ENCODE measurements at regions of chr4 and their contacts with region 1.

Region 1: GRCh38 chr4:1346781-1347409 is at the start of gene UVSSA:
- DNase-seq: peak; percentile 100
- ATAC-seq: peak; percentile 90
- H3K4me3 ChIP-seq: peak within 1 kb of the TSS; percentile 72 to 96
- H3K4me3 Mint-ChIP-seq: peak within 1 kb of the TSS; percentile 89
- H3K27ac ChIP-seq: peak within 1 kb of the TSS; percentile 89 to 92
- H3K27ac Mint-ChIP-seq: peak within 1 kb of the TSS; percentile 95
- H3K4me1 ChIP-seq: peaks cover 23% of the 10 kb centered on the region
- H3K4me1 Mint-ChIP-seq: peaks cover 42% of the 10 kb centered on the region
- H3K27me3 ChIP-seq: no peaks in the 10 kb centered on the region
- H3K27me3 Mint-ChIP-seq: no peaks in the 10 kb centered on the region
- CTCF ChIP-seq: no peak
- total RNA-seq, gene UVSSA: 27.3 to 27.5 TPM

Region 2: DNA sequence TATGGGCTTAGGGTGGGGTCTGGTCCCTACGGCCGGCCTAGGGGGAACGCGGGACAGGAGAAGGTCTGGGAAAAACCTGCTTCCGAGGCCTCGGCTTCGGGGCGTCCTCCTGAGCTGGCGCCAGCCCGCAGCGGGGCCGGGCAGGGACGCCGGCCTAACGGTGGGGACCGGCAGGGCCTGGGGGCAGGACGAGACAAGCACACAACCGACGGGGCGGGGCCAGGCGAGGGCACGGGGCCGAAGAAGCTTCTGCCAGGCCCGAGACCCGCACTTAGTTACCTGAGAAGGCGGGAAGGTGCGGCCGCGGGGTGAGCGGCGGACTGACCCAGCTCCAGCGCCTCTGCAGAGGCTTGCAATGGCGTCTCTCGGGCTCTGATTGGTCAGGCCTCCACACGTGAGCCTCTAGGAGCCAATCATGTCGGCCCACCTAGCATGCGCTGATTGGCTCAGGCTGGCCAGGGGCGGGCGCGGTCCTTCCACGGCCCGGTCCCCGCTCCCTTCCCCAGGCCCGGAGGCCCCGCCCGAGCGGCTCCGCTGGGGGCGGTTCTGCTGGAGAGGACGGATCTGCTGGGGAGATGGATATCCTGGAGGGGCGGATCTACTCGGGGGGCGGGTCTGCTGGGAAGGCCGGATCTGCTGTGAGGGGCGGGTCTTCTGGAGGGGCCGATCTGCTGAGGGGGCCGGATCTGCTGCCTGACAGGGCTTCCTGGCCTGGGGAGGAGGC is 565.2 kb before region 1 on chr4:
- CTCF ChIA-PET with region 1: no interaction called
- POLR2A ChIA-PET with region 1: no interaction called
- intact Hi-C with region 1: loop called in 1 of 2 experiments (anchors 2 kb)
- DNase-seq: peak; percentile 97 to 99 (median 98)
- ATAC-seq: peak; percentile 92
- H3K4me3 ChIP-seq: peak overlapping the region; percentile 76 to 97
- H3K4me3 Mint-ChIP-seq: peak overlapping the region; percentile 92
- H3K27ac ChIP-seq: peak overlapping the region; percentile 94 to 95
- H3K27ac Mint-ChIP-seq: peak overlapping the region; percentile 95
- H3K4me1 ChIP-seq: peaks cover 46% of the 10 kb centered on the region
- H3K4me1 Mint-ChIP-seq: peaks cover 52% of the 10 kb centered on the region
- H3K27me3 ChIP-seq: peaks cover 0 to 17% of the 10 kb centered on the region in 2 experiments
- H3K27me3 Mint-ChIP-seq: peaks cover 21% of the 10 kb centered on the region
- CTCF ChIP-seq: no peak

Region 3: GRCh38 chr4:1082215-1083182 is 264.4 kb before region 1 on chr4:
- CTCF ChIA-PET with region 1: no interaction called
- POLR2A ChIA-PET with region 1: no interaction called
- intact Hi-C with region 1: no loop called
- DNase-seq: peak in 1 of 9 experiments; percentile 25
- ATAC-seq: no peak
- H3K4me3 ChIP-seq: no peak overlapping the region
- H3K4me3 Mint-ChIP-seq: no peak overlapping the region
- H3K27ac ChIP-seq: no peak overlapping the region
- H3K27ac Mint-ChIP-seq: no peak overlapping the region
- H3K4me1 ChIP-seq: no peaks in the 10 kb centered on the region
- H3K4me1 Mint-ChIP-seq: no peaks in the 10 kb centered on the region
- H3K27me3 ChIP-seq: no peaks in the 10 kb centered on the region
- H3K27me3 Mint-ChIP-seq: peaks cover 32% of the 10 kb centered on the region
- CTCF ChIP-seq: no peak

Region 4: GRCh38 chr4:1130316-1131186 is 216.3 kb before region 1 on chr4:
- CTCF ChIA-PET with region 1: interaction called, 52 read pairs
- POLR2A ChIA-PET with region 1: no interaction called
- intact Hi-C with region 1: loop called (anchors 1 kb)
- DNase-seq: peak; percentile 60 to 88 (median 74)
- ATAC-seq: peak; percentile 100
- H3K4me3 ChIP-seq: no peak overlapping the region
- H3K4me3 Mint-ChIP-seq: no peak overlapping the region
- H3K27ac ChIP-seq: no peak overlapping the region
- H3K27ac Mint-ChIP-seq: no peak overlapping the region
- H3K4me1 ChIP-seq: no peaks in the 10 kb centered on the region
- H3K4me1 Mint-ChIP-seq: peaks cover 4% of the 10 kb centered on the region
- H3K27me3 ChIP-seq: no peaks in the 10 kb centered on the region
- H3K27me3 Mint-ChIP-seq: peaks cover 2% of the 10 kb centered on the region
- CTCF ChIP-seq: peak; percentile 99

Region 5: GRCh38 chr4:1266881-1267763 is 79.8 kb before region 1 on chr4:
- CTCF ChIA-PET with region 1: interaction called, 12 read pairs
- POLR2A ChIA-PET with region 1: no interaction called
- intact Hi-C with region 1: loop called (anchors 5 kb)
- DNase-seq: peak in 2 of 9 experiments; percentile 23 to 64
- ATAC-seq: peak; percentile 78
- H3K4me3 ChIP-seq: peak overlapping the region in 1 of 2 experiments; percentile 46
- H3K4me3 Mint-ChIP-seq: peak overlapping the region; percentile 76
- H3K27ac ChIP-seq: peak overlapping the region; percentile 57 to 73
- H3K27ac Mint-ChIP-seq: peak overlapping the region; percentile 93
- H3K4me1 ChIP-seq: peaks cover 12% of the 10 kb centered on the region
- H3K4me1 Mint-ChIP-seq: peaks cover 20% of the 10 kb centered on the region
- H3K27me3 ChIP-seq: no peaks in the 10 kb centered on the region
- H3K27me3 Mint-ChIP-seq: no peaks in the 10 kb centered on the region
- CTCF ChIP-seq: no peak

Region 6: GRCh38 chr4:1329408-1330371 is 17.2 kb before region 1 on chr4:
- CTCF ChIA-PET with region 1: interaction called, 8 read pairs
- POLR2A ChIA-PET with region 1: interaction called, 8 read pairs
- intact Hi-C with region 1: loop called (anchors 1 kb)
- DNase-seq: peak in 6 of 9 experiments; percentile 27 to 74 (median 68)
- ATAC-seq: peak; percentile 49
- H3K4me3 ChIP-seq: no peak overlapping the region
- H3K4me3 Mint-ChIP-seq: peak overlapping the region; percentile 50
- H3K27ac ChIP-seq: peak overlapping the region in 1 of 2 experiments; percentile 78
- H3K27ac Mint-ChIP-seq: peak overlapping the region; percentile 93
- H3K4me1 ChIP-seq: peaks cover 40% of the 10 kb centered on the region
- H3K4me1 Mint-ChIP-seq: peaks cover 24% of the 10 kb centered on the region
- H3K27me3 ChIP-seq: no peaks in the 10 kb centered on the region
- H3K27me3 Mint-ChIP-seq: no peaks in the 10 kb centered on the region
- CTCF ChIP-seq: no peak

Region 7: DNA sequence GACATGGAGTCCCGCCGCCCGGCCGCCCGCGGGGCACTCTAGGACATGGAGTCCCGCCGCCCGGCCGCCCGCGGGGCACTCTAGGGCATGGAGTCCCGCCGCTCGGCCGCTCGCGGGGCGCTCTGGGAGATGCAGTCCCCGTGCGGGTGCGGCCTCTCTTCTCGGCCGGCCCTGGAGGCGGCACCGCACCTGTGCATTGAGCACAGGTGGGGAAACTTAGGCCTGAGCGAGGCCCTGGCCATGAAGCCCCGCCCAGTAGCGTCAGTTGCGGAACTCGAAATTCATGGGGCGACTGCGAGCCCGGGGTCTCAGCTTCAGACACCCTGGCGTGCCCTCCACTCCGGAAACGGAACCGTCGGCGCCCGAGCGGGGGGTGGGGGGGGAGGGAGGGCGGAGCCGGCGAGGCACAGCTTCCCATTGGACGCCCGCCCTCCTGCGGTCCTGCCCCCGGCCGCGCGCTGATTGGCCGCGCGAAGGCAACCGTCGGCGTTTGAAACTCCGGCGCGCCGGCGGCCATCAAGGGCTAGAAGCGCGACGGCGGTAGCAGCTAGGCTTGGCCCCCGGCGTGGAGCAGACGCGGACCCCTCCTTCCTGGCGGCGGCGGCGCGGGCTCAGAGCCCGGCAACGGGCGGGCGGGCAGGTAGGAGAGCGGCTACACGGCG is 374.2 kb after region 1 on chr4 and contains the starts of genes TACC3 and TMEM129:
- CTCF ChIA-PET with region 1: no interaction called
- POLR2A ChIA-PET with region 1: no interaction called
- intact Hi-C with region 1: loop called in 1 of 2 experiments (anchors 2 kb)
- DNase-seq: peak; percentile 89 to 98 (median 94)
- ATAC-seq: peak; percentile 82
- H3K4me3 ChIP-seq: peak within 1 kb of the TSS; percentile 54 to 74
- H3K4me3 Mint-ChIP-seq: peak within 1 kb of the TSS; percentile 86
- H3K27ac ChIP-seq: peak within 1 kb of the TSS; percentile 85 to 86
- H3K27ac Mint-ChIP-seq: peak within 1 kb of the TSS; percentile 100
- H3K4me1 ChIP-seq: peaks cover 56% of the 10 kb centered on the region
- H3K4me1 Mint-ChIP-seq: peaks cover 49% of the 10 kb centered on the region
- H3K27me3 ChIP-seq: no peaks in the 10 kb centered on the region
- H3K27me3 Mint-ChIP-seq: no peaks in the 10 kb centered on the region
- CTCF ChIP-seq: no peak
- total RNA-seq, gene TACC3: 131 to 137 TPM
- total RNA-seq, gene TMEM129: 14.5 to 14.8 TPM

Measured in CD8-positive, alpha-beta T cell (primary cell).